Astrocyte of the cerebellum (primary cell): ENCODE measurements at regions of chr15 and their contacts with region 1.

Region 1: DNA sequence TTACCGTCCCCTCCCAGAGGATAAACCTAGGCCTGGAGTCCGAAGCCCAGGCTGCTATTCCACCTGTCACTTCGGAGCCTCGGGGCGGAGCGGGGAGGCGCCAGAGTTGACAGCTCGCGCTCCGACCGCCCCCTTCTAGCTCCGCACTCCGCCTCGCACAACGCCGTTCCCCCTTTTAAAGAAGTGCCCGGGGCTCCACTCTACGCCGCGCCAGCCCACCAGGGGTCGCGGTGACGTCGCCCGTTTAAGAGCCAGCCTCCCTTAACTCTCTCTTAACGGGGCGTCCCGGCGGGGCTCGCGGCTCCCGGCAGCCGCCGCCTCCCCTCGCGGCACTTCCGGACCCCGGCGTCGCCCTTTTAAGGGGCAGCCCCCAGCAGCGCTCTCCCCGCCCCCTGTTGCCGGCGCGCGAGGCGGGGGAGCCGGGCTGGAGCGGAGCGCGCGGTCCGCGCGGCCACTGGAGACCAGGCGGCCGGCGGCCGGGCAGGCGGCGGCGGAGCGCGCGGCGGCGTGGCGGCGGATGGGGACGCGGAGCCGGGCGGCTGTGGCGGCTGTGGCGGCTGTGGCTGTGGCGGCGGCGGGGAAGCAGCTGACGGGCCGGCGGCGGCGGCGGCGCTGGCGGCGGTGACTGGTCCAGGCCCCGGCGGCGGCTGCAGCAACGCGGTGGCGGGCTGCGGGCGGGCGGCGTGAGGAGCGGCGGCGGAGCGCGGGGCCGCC is at the start of gene INAFM2:
- DNase-seq: peak; percentile 79
- H3K4me3 ChIP-seq: peak within 1 kb of the TSS; percentile 58
- CTCF ChIP-seq: peak; percentile 57

Region 2: GRCh38 chr15:40388946-40389841 is 65.8 kb after region 1 on chr15:
- in situ Hi-C with region 1: loop called (anchors 5 kb)
- DNase-seq: no peak
- H3K4me3 ChIP-seq: no peak overlapping the region
- CTCF ChIP-seq: no peak

Region 3: DNA sequence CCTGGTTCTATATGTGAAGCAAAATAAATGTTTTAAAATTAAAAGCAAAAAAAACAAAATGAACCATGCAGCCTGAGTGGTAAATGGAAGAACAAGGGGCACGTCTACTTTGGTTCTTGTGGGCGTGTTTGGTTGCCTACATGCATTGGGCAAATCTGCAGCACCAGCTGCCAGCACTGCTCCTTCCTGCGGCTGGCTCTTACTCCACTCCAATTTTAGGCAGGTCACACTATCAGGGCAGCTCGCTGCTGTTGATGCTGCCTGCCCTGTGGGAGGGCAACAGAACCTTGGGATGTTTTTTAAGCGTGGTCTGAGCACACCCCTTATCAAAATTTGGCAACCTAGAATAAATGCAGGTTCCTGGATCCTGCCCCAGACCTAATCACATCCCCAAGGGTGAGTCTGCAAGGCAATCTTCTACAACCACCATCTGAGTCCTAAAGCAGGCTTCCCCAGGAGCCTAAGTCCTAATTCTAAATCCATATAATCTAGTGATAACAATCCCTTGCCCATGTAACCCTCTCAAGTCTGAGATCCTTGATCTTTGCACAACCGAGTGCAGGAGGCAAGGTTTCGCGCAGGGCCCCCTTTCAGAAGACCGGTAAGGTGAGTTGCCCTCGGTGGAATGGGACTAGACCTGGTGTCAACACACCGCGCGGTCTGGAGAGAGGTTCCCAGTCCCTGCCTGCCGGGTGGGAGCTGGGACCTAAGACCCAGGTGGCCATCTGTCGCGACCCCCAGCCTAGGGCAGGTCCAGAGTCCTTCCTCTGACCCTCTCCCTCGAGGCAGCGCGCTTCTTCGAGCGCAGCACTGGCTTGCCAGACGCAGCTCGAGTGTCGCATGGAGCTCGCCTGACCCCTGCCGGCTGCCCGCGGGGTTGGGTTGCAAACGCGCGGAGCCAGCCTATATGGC is 98.1 kb after region 1 on chr15:
- in situ Hi-C with region 1: loop called (anchors 5 kb)
- DNase-seq: no peak
- H3K4me3 ChIP-seq: no peak overlapping the region
- CTCF ChIP-seq: peak; percentile 93